Activated CD4-positive, alpha-beta T cell treated with anti-CD3 and anti-CD28 coated beads for 36 hours (primary cell): ENCODE measurements at regions of chr4 and their contacts with region 1.

Region 1: DNA sequence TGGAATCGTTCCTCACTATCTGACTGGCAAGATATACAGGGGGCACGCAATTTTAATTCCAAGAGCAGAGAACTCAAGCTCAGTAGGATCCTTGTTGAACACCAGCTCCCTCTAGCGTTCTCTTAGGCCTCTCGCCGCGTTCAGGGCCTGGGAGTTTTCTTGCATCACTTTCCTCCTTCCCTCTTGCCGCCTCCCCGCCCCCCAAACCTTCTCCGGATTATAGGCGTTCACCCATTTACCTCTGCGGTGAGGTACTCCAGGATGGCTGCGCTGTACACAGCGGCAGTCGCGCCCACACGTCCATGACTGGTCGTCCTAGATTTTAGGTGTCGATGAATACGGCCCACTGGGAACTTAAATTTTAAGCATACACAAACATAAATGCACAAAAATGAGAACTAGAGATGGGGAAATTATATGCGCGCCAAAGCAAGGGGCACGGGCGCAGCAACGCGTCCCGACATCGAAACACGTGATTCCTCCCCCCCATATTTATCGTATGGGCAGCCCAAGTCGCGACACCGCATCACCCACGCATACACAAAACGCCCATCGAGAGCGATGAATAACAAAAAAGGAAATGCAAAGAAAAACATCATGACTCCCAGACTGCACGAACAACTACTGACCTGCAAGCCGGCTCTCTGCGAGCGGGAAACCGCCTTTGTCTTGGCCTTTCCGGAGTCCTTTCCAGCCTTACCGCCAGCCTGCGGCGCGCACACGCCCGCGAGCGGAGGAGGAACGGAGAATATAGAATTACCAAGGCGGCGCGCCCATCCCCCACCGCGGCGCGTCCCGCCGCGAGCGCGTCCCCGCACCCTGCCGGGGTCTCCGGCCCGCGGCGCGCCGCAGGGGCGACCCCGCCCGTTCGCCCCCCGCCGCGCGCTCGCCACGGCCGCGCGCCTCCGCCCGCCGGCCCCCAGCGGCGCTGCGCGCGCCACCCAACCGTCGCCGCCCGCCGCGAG is 759 bp downstream of the H2AZ1 start:
- DNase-seq: peak; percentile 96
- ATAC-seq: peak; percentile 52
- H3K4me3 Mint-ChIP-seq: no peak overlapping the region
- H3K27ac Mint-ChIP-seq: no peak overlapping the region
- H3K4me1 Mint-ChIP-seq: peaks cover 33% of the 10 kb centered on the region
- H3K27me3 Mint-ChIP-seq: no peaks in the 10 kb centered on the region

Region 2: GRCh38 chr4:99088481-99089365 is 860.6 kb before region 1 on chr4 and contains the start of gene ADH5:
- CTCF ChIA-PET with region 1: no interaction called
- POLR2A ChIA-PET with region 1: no interaction called
- intact Hi-C with region 1: loop called in 1 of 2 experiments (anchors 2 kb)
- DNase-seq: peak; percentile 96
- ATAC-seq: peak; percentile 97
- H3K4me3 Mint-ChIP-seq: peak within 1 kb of the TSS; percentile 98
- H3K27ac Mint-ChIP-seq: peak within 1 kb of the TSS; percentile 99
- H3K4me1 Mint-ChIP-seq: peaks cover 42% of the 10 kb centered on the region
- H3K27me3 Mint-ChIP-seq: no peaks in the 10 kb centered on the region
- total RNA-seq, gene ADH5: 81.3 to 119 TPM

Region 3: DNA sequence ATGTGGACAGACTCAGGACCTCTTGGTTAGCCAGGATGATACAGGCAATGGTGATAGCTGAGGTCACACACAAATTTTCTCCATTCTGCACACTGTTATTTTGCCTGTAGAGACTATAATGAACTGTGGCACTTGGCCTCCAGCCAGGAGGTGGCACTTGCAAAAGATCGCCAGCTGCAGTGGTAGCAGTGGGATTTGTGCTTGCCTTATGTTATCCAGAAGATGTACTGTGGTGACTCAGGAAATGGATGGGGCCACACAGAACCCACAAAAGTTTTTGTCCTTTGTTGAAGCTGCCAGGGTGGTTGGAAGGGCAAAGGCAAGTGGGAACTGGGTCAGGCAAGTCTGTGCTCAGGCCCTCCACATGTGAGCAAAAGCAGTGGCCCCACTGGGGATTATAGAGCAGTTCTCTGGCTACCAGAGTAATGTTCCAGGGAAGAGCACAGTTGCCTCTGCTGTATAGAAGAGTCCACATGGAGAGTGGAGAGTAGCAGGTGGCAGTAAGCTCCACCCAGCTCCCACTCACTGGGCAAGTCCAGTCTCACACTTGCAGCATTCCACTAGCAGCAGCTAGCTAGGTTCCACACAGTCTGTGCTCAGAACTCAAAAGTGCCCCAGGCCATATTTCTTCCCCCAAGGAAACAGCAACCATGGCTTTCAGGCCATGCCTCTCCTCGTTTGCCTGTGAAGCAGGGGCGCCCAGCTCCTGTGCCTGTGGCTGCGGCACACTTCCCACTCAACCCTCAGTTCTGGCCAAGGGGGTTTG is 444.3 kb before region 1 on chr4:
- CTCF ChIA-PET with region 1: no interaction called
- POLR2A ChIA-PET with region 1: interaction called, 3 read pairs
- intact Hi-C with region 1: loop called in 1 of 2 experiments (anchors 1 kb)
- DNase-seq: peak; percentile 27
- ATAC-seq: no peak
- H3K4me3 Mint-ChIP-seq: no peak overlapping the region
- H3K27ac Mint-ChIP-seq: peak overlapping the region; percentile 37
- H3K4me1 Mint-ChIP-seq: peaks cover 53% of the 10 kb centered on the region
- H3K27me3 Mint-ChIP-seq: no peaks in the 10 kb centered on the region

Region 4: GRCh38 chr4:99529228-99529627 is 420.1 kb before region 1 on chr4:
- CTCF ChIA-PET with region 1: no interaction called
- POLR2A ChIA-PET with region 1: no interaction called
- intact Hi-C with region 1: no loop called
- DNase-seq: no peak
- ATAC-seq: no peak
- H3K4me3 Mint-ChIP-seq: no peak overlapping the region
- H3K27ac Mint-ChIP-seq: no peak overlapping the region
- H3K4me1 Mint-ChIP-seq: no peaks in the 10 kb centered on the region
- H3K27me3 Mint-ChIP-seq: peaks cover 10% of the 10 kb centered on the region

Region 5: GRCh38 chr4:99875072-99875471 is 74.2 kb before region 1 on chr4:
- CTCF ChIA-PET with region 1: no interaction called
- POLR2A ChIA-PET with region 1: no interaction called
- intact Hi-C with region 1: no loop called
- DNase-seq: no peak
- ATAC-seq: no peak
- H3K4me3 Mint-ChIP-seq: no peak overlapping the region
- H3K27ac Mint-ChIP-seq: no peak overlapping the region
- H3K4me1 Mint-ChIP-seq: peaks cover 7% of the 10 kb centered on the region
- H3K27me3 Mint-ChIP-seq: no peaks in the 10 kb centered on the region

Region 6: GRCh38 chr4:99894161-99894997 is 54.9 kb before region 1 on chr4 and contains the start of gene LAMTOR3:
- CTCF ChIA-PET with region 1: interaction called, 4 read pairs
- POLR2A ChIA-PET with region 1: interaction called, 16 read pairs
- intact Hi-C with region 1: loop called (anchors 1 kb)
- DNase-seq: peak; percentile 94
- ATAC-seq: peak; percentile 100
- H3K4me3 Mint-ChIP-seq: peak within 1 kb of the TSS; percentile 96
- H3K27ac Mint-ChIP-seq: peak within 1 kb of the TSS; percentile 94
- H3K4me1 Mint-ChIP-seq: peaks cover 32% of the 10 kb centered on the region
- H3K27me3 Mint-ChIP-seq: no peaks in the 10 kb centered on the region
- total RNA-seq, gene LAMTOR3: 28.5 to 30.4 TPM

Region 7: DNA sequence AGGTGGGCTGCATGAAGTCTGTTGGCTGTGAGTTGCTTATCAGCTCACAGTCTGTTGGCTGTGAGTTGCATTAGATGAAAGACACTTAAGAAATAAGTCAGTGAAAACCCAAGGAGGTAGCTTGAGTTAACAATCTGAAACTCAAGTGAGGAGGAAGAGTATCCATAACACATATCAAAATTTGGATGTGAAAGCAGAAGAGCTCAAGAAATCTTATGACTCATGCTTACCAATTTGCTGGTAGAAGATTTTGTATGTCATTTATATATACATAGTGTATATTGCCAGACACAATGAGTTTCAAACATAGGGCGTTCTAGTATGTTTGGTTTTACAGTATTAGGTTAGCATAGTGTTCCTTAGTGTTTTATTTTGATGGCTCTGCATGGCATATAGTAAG is 133.5 kb after region 1 on chr4:
- CTCF ChIA-PET with region 1: no interaction called
- POLR2A ChIA-PET with region 1: interaction called, 5 read pairs
- intact Hi-C with region 1: loop called in 1 of 2 experiments (anchors 5 kb)
- DNase-seq: no peak
- ATAC-seq: peak; percentile 73
- H3K4me3 Mint-ChIP-seq: no peak overlapping the region
- H3K27ac Mint-ChIP-seq: peak overlapping the region; percentile 81
- H3K4me1 Mint-ChIP-seq: peaks cover 52% of the 10 kb centered on the region
- H3K27me3 Mint-ChIP-seq: peaks cover 3% of the 10 kb centered on the region